Vagina (tissue), 2 donors: ENCODE measurements at regions of chr9 and their contacts with region 1.

Region 1: GRCh38 chr9:73081979-73082657 is 69.5 kb upstream of the ANXA1 start:
- DNase-seq: no peak
- H3K4me3 ChIP-seq: no peak overlapping the region
- H3K27ac ChIP-seq: no peak overlapping the region
- H3K4me1 ChIP-seq: no peaks in the 10 kb centered on the region
- H3K27me3 ChIP-seq: no peaks in the 10 kb centered on the region
- CTCF ChIP-seq: peak; percentile 43 to 81 (median 48)
- POLR2A ChIP-seq: no peak

Region 2: DNA sequence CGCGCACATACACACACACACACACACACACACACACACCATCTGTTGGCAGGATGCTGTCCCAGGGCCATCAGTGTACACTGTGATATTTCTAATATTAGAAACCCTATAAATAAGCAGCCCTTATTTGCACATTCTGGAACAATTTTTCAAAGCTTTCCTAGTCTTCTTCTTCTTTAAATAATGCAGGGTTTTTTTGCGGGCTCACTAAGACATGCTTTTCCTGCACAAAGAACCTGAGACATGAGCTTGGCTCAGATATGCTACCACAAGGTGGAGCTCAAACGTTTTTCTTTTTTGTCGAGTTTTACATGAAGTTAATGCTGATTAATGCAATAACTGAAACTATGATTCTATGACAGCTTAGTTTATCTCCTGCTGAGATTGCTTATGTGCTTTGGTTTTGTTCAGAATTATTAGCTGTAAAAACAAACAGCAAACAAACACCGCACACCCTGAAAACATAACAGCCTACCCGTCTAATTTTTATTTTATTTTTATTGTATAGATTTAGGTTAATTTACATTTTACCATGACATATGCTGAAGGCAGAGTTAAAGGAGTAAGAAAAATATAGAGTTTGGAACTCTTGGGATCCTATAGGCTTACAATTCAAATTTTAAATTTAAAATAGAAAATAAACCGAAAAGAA is 225.0 kb before region 1 on chr9:
- intact Hi-C with region 1: loop called (anchors 10 kb)
- DNase-seq: no peak
- H3K4me3 ChIP-seq: no peak overlapping the region
- H3K27ac ChIP-seq: no peak overlapping the region
- H3K4me1 ChIP-seq: peaks cover 16% of the 10 kb centered on the region
- H3K27me3 ChIP-seq: no peaks in the 10 kb centered on the region
- CTCF ChIP-seq: peak; percentile 33 to 63 (median 62)
- POLR2A ChIP-seq: no peak